Tibial artery (tissue), 4 donors: ENCODE measurements at regions of chr19 and their contacts with region 1.

Region 1: GRCh38 chr19:23872282-23872919 is 42.3 kb upstream of the ZNF726 start:
- DNase-seq: no peak
- H3K4me3 ChIP-seq: no peak overlapping the region
- H3K27ac ChIP-seq: no peak overlapping the region
- H3K4me1 ChIP-seq: no peaks in the 10 kb centered on the region
- H3K27me3 ChIP-seq: no peaks in the 10 kb centered on the region
- CTCF ChIP-seq: no peak

Region 2: GRCh38 chr19:23969630-23970029 is 97.2 kb after region 1 on chr19:
- intact Hi-C with region 1: loop called (anchors 5 kb)
- DNase-seq: no peak
- H3K4me3 ChIP-seq: no peak overlapping the region
- H3K27ac ChIP-seq: no peak overlapping the region
- H3K4me1 ChIP-seq: peaks cover 0 to 5% (median 0%) of the 10 kb centered on the region in 4 donors
- H3K27me3 ChIP-seq: peaks cover 0 to 11% of the 10 kb centered on the region in 2 donors
- CTCF ChIP-seq: no peak